ENCODE measurements at regions of chr11 and their contacts with region 1.

Region 1: GRCh38 chr11:123246749-123247495 is 51.9 kb upstream of the CLMP start:
- DNase-seq: peak; percentile 80
- H3K4me3 ChIP-seq: peak overlapping the region in 1 of 2 experiments; percentile 46; a peak in 1 of 4 replicates
- H3K27ac ChIP-seq: no peak overlapping the region
- H3K4me1 ChIP-seq: peaks cover 7 to 14% of the 10 kb centered on the region in 2 experiments; a peak in 2 of 4 replicates
- H3K27me3 ChIP-seq: no peaks in the 10 kb centered on the region
- CTCF ChIP-seq: peak; percentile 98
- EP300 ChIP-seq: no peak
- RAD21 ChIP-seq: peak; percentile 99

Region 2: DNA sequence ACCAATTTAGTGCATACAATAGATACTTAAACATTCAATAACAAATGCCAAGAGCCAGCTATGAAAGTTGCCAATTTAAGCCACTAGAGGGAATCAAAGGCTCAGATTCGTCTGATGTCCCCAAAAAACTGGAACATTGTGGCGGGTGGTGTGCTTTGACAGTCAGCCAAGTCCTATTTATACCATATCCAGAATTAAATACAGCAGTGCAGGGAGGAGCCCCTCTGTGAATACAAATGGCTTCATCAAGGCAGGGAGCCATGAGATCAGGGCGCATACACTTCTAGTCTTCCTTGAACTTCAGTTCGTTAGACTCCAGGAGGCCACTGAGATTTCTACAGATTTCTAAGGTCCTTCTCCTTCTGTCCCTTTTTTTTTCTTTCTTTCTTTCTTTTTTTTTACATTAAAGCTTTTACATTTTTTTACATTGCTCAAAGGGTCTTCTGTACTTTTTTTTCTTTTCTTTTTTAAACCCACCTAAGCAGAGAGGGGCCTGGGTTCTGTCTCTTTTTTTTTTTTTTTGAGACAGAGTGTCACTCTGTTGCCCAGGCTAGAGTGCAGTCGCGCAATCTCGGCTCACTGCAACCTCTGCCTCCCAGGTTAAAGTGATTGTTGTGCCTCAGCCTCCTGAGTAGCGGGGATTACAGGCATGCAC is 143.5 kb before region 1 on chr11:
- CTCF ChIA-PET with region 1: interaction called, 437 read pairs
- POLR2A ChIA-PET with region 1: interaction called, 7 read pairs
- DNase-seq: peak; percentile 76
- H3K4me3 ChIP-seq: peak overlapping the region in 1 of 2 experiments; percentile 31; a peak in 1 of 4 replicates
- H3K27ac ChIP-seq: peak overlapping the region; percentile 31 to 53; a peak in 3 of 4 replicates
- H3K4me1 ChIP-seq: peaks cover 8 to 16% of the 10 kb centered on the region in 2 experiments; a peak in 2 of 4 replicates
- H3K27me3 ChIP-seq: no peaks in the 10 kb centered on the region
- CTCF ChIP-seq: peak; percentile 81
- EP300 ChIP-seq: no peak
- RAD21 ChIP-seq: peak; percentile 90

Region 3: DNA sequence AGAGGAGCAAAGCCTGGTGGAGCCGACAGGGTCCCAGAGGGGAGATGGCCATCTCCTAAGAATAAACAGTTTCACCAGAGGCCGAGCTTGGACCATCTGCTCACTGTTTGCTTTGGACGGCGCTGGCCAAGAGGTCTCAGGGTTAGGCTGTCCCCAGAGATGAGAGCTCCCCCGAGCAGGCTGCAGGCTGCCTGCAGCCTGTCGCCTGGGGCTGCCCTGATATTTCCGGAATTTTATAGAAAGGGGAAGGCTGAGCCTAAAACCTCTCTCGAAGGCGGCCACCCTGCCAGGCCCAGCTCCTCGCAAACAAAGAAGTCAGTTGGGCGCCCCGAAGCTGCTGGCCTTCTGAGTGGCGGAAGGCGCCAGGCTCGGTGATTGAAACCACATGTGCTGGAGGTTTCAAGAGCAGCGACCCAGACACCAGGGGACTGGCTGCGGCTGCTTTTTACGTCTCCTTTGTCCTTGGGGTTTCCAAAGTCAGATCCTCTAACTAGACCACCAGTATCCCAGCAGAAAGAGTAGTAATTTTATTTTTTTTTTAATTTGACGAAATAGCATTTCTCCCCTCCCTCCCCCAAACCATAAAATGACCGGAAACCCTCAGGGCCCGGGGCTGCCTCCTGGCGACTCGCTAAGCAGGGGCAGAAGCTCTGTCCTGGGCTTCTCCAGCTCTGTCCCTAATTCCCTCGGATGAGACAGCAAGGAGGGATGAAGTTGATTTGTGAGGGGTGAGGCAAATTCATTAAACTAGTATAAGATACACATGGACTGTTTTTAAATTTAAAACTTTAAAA is 109.3 kb before region 1 on chr11:
- CTCF ChIA-PET with region 1: interaction called, 21 read pairs
- POLR2A ChIA-PET with region 1: interaction called, 5 read pairs
- DNase-seq: peak; percentile 85
- H3K4me3 ChIP-seq: peak overlapping the region; percentile 6 to 40; a peak in 1 of 4 replicates
- H3K27ac ChIP-seq: peak overlapping the region in 1 of 2 experiments; percentile 99; a peak in 2 of 4 replicates
- H3K4me1 ChIP-seq: peaks cover 14 to 52% of the 10 kb centered on the region in 2 experiments
- H3K27me3 ChIP-seq: no peaks in the 10 kb centered on the region
- CTCF ChIP-seq: peak; percentile 39
- EP300 ChIP-seq: peak; percentile 46 to 70; a peak in 3 of 4 replicates
- RAD21 ChIP-seq: peak; percentile 28

Region 4: GRCh38 chr11:123166071-123166559 is 80.8 kb before region 1 on chr11:
- CTCF ChIA-PET with region 1: interaction called, 24 read pairs
- POLR2A ChIA-PET with region 1: no interaction called
- DNase-seq: peak; percentile 64
- H3K4me3 ChIP-seq: no peak overlapping the region
- H3K27ac ChIP-seq: peak overlapping the region; percentile 33 to 83; a peak in 3 of 4 replicates
- H3K4me1 ChIP-seq: peaks cover 17 to 39% of the 10 kb centered on the region in 2 experiments; a peak in 2 of 4 replicates
- H3K27me3 ChIP-seq: no peaks in the 10 kb centered on the region
- CTCF ChIP-seq: peak; percentile 75
- EP300 ChIP-seq: 0 out of 4 replicates have a peak, but pooled peaks of 1 of the 2 experiments have one; percentile 14
- RAD21 ChIP-seq: peak; percentile 72

Region 5: GRCh38 chr11:123202155-123203151 is 44.5 kb before region 1 on chr11:
- CTCF ChIA-PET with region 1: interaction called, 27 read pairs
- POLR2A ChIA-PET with region 1: no interaction called
- DNase-seq: peak; percentile 59
- H3K4me3 ChIP-seq: no peak overlapping the region; a peak in 1 of 4 replicates
- H3K27ac ChIP-seq: peak overlapping the region; percentile 29 to 98
- H3K4me1 ChIP-seq: peaks cover 39 to 48% of the 10 kb centered on the region in 2 experiments
- H3K27me3 ChIP-seq: no peaks in the 10 kb centered on the region
- CTCF ChIP-seq: no peak
- EP300 ChIP-seq: no peak
- RAD21 ChIP-seq: no peak

Region 6: GRCh38 chr11:123228496-123229163 is 18.3 kb before region 1 on chr11:
- CTCF ChIA-PET with region 1: interaction called, 19 read pairs
- POLR2A ChIA-PET with region 1: no interaction called
- DNase-seq: no peak
- H3K4me3 ChIP-seq: no peak overlapping the region
- H3K27ac ChIP-seq: no peak overlapping the region
- H3K4me1 ChIP-seq: peaks cover 2 to 26% of the 10 kb centered on the region in 2 experiments; a peak in 2 of 4 replicates
- H3K27me3 ChIP-seq: no peaks in the 10 kb centered on the region
- CTCF ChIP-seq: no peak
- EP300 ChIP-seq: no peak
- RAD21 ChIP-seq: no peak

Region 7: GRCh38 chr11:123308077-123308476 is 61.2 kb after region 1 on chr11:
- CTCF ChIA-PET with region 1: no interaction called
- POLR2A ChIA-PET with region 1: no interaction called
- DNase-seq: peak; percentile 62
- H3K4me3 ChIP-seq: no peak overlapping the region
- H3K27ac ChIP-seq: peak overlapping the region; percentile 55 to 63
- H3K4me1 ChIP-seq: peaks cover 5 to 24% of the 10 kb centered on the region in 2 experiments; a peak in 3 of 4 replicates
- H3K27me3 ChIP-seq: no peaks in the 10 kb centered on the region
- CTCF ChIP-seq: no peak
- EP300 ChIP-seq: peak in 1 of 2 experiments; percentile 70; a peak in 2 of 4 replicates
- RAD21 ChIP-seq: 0 out of 2 replicates have a peak, but pooled peaks have one; percentile 4